Caco-2 (cell line): ENCODE measurements at regions of chr1 and their contacts with region 1.

Region 1: GRCh38 chr1:204363335-204364124 is 3.8 kb upstream of the PLEKHA6 start:
- DNase-seq: peak; percentile 74 to 78
- H3K4me3 ChIP-seq: peak overlapping the region; percentile 26
- H3K4me3 Mint-ChIP-seq: peak overlapping the region; percentile 62
- H3K27ac Mint-ChIP-seq: peak overlapping the region; percentile 15
- H3K4me1 ChIP-seq: peaks cover 56% of the 10 kb centered on the region
- H3K4me1 Mint-ChIP-seq: peaks cover 16% of the 10 kb centered on the region
- H3K27me3 ChIP-seq: no peaks in the 10 kb centered on the region
- H3K27me3 Mint-ChIP-seq: no peaks in the 10 kb centered on the region
- CTCF ChIP-seq: peak; percentile 93 to 97

Region 2: DNA sequence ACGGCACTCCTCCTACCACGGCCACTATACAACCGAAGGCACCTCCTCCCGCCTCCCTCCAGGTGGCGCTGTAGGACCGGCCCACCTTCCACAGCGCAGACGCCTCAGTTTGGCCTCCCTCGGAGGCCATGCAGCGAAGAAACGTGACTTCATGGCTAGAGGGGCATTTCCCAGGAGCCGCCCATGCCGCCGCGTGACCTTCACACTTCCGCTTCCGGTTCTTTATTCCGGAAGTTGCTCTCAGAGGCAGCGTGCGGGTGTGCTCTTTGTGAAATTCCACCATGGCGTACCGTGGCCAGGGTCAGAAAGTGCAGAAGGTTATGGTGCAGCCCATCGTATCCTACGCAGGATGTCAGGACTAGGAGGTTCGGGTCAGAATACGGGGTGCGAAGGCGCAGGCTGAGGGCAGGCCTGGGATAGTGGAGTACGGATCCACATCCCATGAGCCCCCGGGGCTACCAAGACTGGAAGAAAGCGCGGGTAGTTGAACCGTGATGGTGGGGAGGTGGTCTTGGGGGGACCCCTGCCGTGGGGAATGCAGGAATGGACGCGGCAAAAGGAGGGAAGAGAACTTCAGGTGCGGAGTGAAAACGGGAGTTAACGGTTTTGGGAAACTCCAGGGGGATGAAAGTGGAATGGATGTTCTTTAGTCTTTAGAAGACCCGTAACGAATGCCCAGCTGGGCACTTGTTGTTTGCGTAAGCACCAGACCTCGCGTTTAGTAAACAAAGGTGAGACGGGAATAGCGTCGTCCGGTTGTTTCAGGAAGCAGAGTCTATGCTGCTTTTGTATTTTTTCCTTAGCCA is 501.9 kb before region 1 on chr1 and contains the start of gene SNRPE:
- CTCF ChIA-PET with region 1: no interaction called
- POLR2A ChIA-PET with region 1: no interaction called
- intact Hi-C with region 1: loop called (anchors 5 kb)
- DNase-seq: peak; percentile 97
- H3K4me3 ChIP-seq: peak within 1 kb of the TSS; percentile 89
- H3K4me3 Mint-ChIP-seq: peak within 1 kb of the TSS; percentile 93
- H3K27ac Mint-ChIP-seq: peak within 1 kb of the TSS; percentile 98
- H3K4me1 ChIP-seq: peaks cover 20% of the 10 kb centered on the region
- H3K4me1 Mint-ChIP-seq: peaks cover 6% of the 10 kb centered on the region
- H3K27me3 ChIP-seq: no peaks in the 10 kb centered on the region
- H3K27me3 Mint-ChIP-seq: no peaks in the 10 kb centered on the region
- CTCF ChIP-seq: peak; percentile 89 to 96
- total RNA-seq, gene SNRPE: 236 and 264 TPM in 2 replicates

Region 3: DNA sequence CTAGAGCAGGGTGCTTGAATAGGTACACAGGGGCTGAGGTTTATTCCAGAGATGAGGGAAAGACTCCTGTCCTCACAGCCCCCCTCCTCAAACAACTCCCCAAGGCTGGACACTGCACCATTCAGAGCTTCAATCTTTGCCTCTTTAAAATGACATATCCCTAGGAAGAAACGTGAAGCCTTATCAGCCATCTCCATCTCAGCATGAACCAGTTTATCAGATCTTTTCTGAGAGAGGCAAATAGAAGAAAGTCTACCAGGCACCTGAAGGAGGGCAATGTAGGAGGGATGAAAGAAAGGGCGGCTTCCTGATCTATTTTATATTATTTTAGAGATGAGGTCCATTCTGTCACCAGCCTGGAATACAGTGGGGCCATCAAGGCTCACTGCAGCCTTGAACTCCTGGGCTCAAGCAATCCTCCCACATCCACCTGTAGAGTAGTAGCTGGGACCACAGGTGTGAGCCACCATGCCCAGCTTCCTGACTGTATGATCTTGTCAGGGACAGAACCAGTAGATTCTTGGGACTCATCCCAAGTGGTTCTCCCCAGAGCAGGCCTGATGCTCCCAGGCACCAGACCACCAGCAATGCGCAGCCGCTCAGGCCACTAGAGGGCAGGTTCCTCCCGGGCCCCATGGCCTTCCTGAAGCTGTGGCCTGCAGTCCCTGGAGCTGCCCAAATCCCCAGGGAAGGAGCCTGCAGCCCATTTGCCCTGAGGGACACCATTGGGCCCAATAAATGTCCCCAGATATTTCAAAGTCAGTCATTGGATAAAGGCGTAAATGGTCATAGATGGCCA is 105.4 kb before region 1 on chr1:
- CTCF ChIA-PET with region 1: interaction called, 19 read pairs
- POLR2A ChIA-PET with region 1: no interaction called
- intact Hi-C with region 1: loop called (anchors 1 kb)
- DNase-seq: peak; percentile 76 to 84
- H3K4me3 ChIP-seq: no peak overlapping the region
- H3K4me3 Mint-ChIP-seq: no peak overlapping the region
- H3K27ac Mint-ChIP-seq: no peak overlapping the region
- H3K4me1 ChIP-seq: peaks cover 8% of the 10 kb centered on the region; the same call in 1 of the 2 replicates
- H3K4me1 Mint-ChIP-seq: no peaks in the 10 kb centered on the region
- H3K27me3 ChIP-seq: no peaks in the 10 kb centered on the region
- H3K27me3 Mint-ChIP-seq: no peaks in the 10 kb centered on the region
- CTCF ChIP-seq: peak; percentile 86 to 92

Region 4: GRCh38 chr1:204320413-204320812 is 43.1 kb before region 1 on chr1:
- CTCF ChIA-PET with region 1: interaction called, 3 read pairs
- POLR2A ChIA-PET with region 1: no interaction called
- intact Hi-C with region 1: loop called (anchors 2 kb)
- DNase-seq: peak; percentile 63 to 72
- H3K4me3 ChIP-seq: no peak overlapping the region
- H3K4me3 Mint-ChIP-seq: no peak overlapping the region
- H3K27ac Mint-ChIP-seq: peak overlapping the region; percentile 83
- H3K4me1 ChIP-seq: peaks cover 67% of the 10 kb centered on the region
- H3K4me1 Mint-ChIP-seq: peaks cover 48% of the 10 kb centered on the region
- H3K27me3 ChIP-seq: no peaks in the 10 kb centered on the region
- H3K27me3 Mint-ChIP-seq: no peaks in the 10 kb centered on the region
- CTCF ChIP-seq: no peak

Region 5: DNA sequence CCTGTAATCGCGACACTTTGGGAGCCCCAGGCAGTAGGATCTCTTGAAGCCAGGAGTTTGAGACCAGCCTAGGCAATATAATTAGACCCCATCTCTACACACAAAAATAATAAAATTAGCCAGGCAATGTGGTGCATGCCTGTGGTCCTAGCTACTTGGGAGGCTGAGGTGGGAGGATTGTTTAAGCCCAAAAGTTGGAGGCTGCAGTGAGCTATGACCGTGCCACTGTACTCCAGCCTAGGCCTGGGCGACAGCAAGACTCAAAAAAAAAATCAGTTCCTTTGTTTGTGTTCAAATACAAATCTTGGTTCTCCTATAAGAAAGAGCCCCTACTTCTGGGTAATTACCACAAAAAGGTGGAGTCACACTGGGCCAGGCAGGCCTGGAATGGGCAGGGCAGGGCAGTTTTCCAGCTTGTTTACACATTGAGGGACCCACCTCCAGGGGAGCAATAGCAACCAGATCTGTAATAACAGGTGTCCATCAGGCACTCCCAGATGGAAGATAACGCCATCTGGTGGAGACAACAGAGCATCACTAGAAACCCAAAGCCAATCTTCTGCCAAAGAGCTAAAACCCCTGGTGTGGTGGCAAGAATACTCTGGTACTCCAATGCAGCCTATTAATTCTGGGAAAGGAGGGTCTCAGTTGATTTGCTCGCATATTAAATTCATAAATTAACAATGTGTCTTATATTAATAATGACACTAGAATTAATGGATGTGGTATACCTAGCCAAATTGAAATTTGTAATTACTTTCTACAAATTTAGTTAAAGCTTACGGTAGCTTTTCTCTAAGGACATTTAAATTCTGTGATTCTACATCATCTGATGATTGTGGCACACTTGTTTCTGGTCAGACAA is 34.9 kb after region 1 on chr1:
- CTCF ChIA-PET with region 1: interaction called, 14 read pairs
- POLR2A ChIA-PET with region 1: no interaction called
- intact Hi-C with region 1: loop called (anchors 1 kb)
- DNase-seq: peak; percentile 88 to 91
- H3K4me3 ChIP-seq: no peak overlapping the region
- H3K4me3 Mint-ChIP-seq: no peak overlapping the region
- H3K27ac Mint-ChIP-seq: no peak overlapping the region
- H3K4me1 ChIP-seq: no peaks in the 10 kb centered on the region
- H3K4me1 Mint-ChIP-seq: peaks cover 10% of the 10 kb centered on the region
- H3K27me3 ChIP-seq: no peaks in the 10 kb centered on the region
- H3K27me3 Mint-ChIP-seq: no peaks in the 10 kb centered on the region
- CTCF ChIP-seq: peak; percentile 82 to 90